Right ventricle myocardium inferior (tissue), 1 donor: ENCODE measurements at regions of chr12 and their contacts with region 1.

Region 1: GRCh38 chr12:96132819-96133218 is 61.4 kb upstream of the ELK3 start:
- DNase-seq: no peak
- ATAC-seq: no peak

Region 2: GRCh38 chr12:96061864-96062453 is 70.9 kb before region 1 on chr12:
- intact Hi-C with region 1: loop called (anchors 5 kb)
- DNase-seq: no peak
- ATAC-seq: peak; percentile 82